ENCODE measurements at regions of chr11 and their contacts with region 1.

Region 1: GRCh38 chr11:121318848-121319834 is 26.6 kb downstream of the SC5D start:
- DNase-seq: peak in 1 of 5 donors; percentile 10
- ATAC-seq: peak in 3 of 4 donors; percentile 66 to 78 (median 74)
- H3K4me3 ChIP-seq: no peak overlapping the region
- H3K27ac ChIP-seq: no peak overlapping the region
- H3K4me1 ChIP-seq: peaks cover 0 to 5% (median 0%) of the 10 kb centered on the region in 12 donors
- H3K27me3 ChIP-seq: peaks cover 0 to 8% (median 0%) of the 10 kb centered on the region in 9 donors
- CTCF ChIP-seq: peak; percentile 45 to 75 (median 66)
- POLR2A ChIP-seq: no peak

Region 2: GRCh38 chr11:121063728-121064127 is 255.4 kb before region 1 on chr11:
- intact Hi-C with region 1: no loop called
- DNase-seq: no peak
- ATAC-seq: no peak
- H3K4me3 ChIP-seq: no peak overlapping the region
- H3K27ac ChIP-seq: no peak overlapping the region
- H3K4me1 ChIP-seq: peaks cover 0 to 9% (median 0%) of the 10 kb centered on the region in 12 donors
- H3K27me3 ChIP-seq: no peaks in the 10 kb centered on the region
- CTCF ChIP-seq: peak in 11 of 12 donors; percentile 8 to 52 (median 35)
- POLR2A ChIP-seq: no peak

Region 3: GRCh38 chr11:121426476-121427399 is 107.6 kb after region 1 on chr11:
- intact Hi-C with region 1: loop called in 2 of 10 experiments (anchors 10 kb)
- DNase-seq: peak; percentile 49 to 80 (median 62)
- ATAC-seq: peak; percentile 58 to 94 (median 80)
- H3K4me3 ChIP-seq: peak overlapping the region in 10 of 12 donors; percentile 15 to 53 (median 38)
- H3K27ac ChIP-seq: peak overlapping the region in 3 of 12 donors; percentile 15 to 50 (median 19)
- H3K4me1 ChIP-seq: peaks cover 0 to 42% (median 0%) of the 10 kb centered on the region in 12 donors
- H3K27me3 ChIP-seq: no peaks in the 10 kb centered on the region
- CTCF ChIP-seq: peak in 7 of 12 donors; percentile 13 to 51 (median 31)
- POLR2A ChIP-seq: no peak

Region 4: DNA sequence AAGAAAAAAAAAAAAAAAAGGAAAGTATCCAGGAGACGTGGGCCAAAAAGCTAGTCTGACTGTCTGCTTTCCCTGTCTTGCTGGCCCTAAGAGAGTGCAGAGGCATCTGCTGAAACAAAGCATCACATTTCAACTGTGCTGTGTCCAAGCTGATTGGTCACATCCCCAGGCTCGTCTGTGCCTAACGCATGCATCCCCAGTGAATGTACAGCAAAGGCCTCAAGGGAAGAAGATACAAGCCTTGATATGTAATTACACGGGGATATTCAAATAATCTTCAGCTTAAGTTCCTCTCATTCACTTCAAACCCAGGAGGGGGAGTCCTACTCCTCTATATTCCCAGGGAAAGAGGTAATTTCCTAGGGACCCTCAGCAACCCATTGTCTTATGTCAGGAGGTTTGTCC is 127.6 kb after region 1 on chr11:
- intact Hi-C with region 1: loop called in 7 of 10 experiments (anchors 5 to 10 kb)
- DNase-seq: no peak
- ATAC-seq: no peak
- H3K4me3 ChIP-seq: no peak overlapping the region
- H3K27ac ChIP-seq: no peak overlapping the region
- H3K4me1 ChIP-seq: peaks cover 0 to 57% (median 1%) of the 10 kb centered on the region in 12 donors
- H3K27me3 ChIP-seq: peaks cover 0 to 4% (median 0%) of the 10 kb centered on the region in 9 donors
- CTCF ChIP-seq: no peak
- POLR2A ChIP-seq: no peak

Region 5: GRCh38 chr11:121534131-121535093 is 215.3 kb after region 1 on chr11:
- intact Hi-C with region 1: loop called (anchors 1 to 10 kb)
- DNase-seq: no peak
- ATAC-seq: peak in 3 of 4 donors; percentile 68 to 80 (median 78)
- H3K4me3 ChIP-seq: no peak overlapping the region
- H3K27ac ChIP-seq: no peak overlapping the region
- H3K4me1 ChIP-seq: peaks cover 0 to 3% (median 0%) of the 10 kb centered on the region in 12 donors
- H3K27me3 ChIP-seq: no peaks in the 10 kb centered on the region
- CTCF ChIP-seq: peak in 11 of 12 donors; percentile 12 to 61 (median 47)
- POLR2A ChIP-seq: no peak

Region 6: DNA sequence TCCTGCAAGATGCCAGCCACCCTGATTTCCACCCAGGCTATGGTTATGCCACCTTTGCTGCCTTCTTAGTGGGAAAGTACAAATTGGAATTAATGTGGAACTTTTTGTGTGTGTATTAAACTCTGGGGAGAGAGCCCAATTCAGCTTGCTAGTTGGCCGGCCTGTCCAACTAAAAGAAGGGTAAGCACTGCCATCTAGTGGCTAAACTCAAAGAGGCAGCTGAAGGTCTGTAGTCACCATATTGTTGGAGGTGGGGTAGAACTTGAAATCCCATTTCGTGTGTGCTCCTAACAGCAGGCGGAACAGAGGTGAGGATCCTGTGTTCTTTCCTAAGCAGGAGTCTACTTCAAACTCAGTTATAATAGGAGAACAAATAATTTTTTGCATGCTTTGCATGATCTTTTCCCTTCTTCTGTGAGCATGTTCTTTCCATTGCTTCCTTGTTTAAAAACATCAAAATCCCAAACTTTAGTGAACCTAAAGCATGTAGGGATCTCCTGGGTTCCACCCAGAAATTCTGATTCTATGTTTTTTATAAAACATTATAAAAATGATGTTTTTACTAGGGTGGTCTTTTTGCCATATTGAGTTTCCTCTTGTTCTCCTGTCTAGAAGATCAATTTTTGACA is 272.4 kb after region 1 on chr11:
- intact Hi-C with region 1: loop called (anchors 1 to 2 kb)
- DNase-seq: peak in 4 of 5 donors; percentile 43 to 67 (median 57)
- ATAC-seq: peak; percentile 45 to 82 (median 78)
- H3K4me3 ChIP-seq: no peak overlapping the region
- H3K27ac ChIP-seq: no peak overlapping the region
- H3K4me1 ChIP-seq: peaks cover 0 to 19% (median 0%) of the 10 kb centered on the region in 12 donors
- H3K27me3 ChIP-seq: no peaks in the 10 kb centered on the region
- CTCF ChIP-seq: peak; percentile 78 to 92 (median 87)
- POLR2A ChIP-seq: no peak

Region 7: GRCh38 chr11:121961321-121961801 is 642.2 kb after region 1 on chr11:
- intact Hi-C with region 1: no loop called
- DNase-seq: no peak
- ATAC-seq: no peak
- H3K4me3 ChIP-seq: no peak overlapping the region
- H3K27ac ChIP-seq: peak overlapping the region in 3 of 12 donors; percentile 2 to 41 (median 15)
- H3K4me1 ChIP-seq: peaks cover 0 to 22% (median 4%) of the 10 kb centered on the region in 12 donors
- H3K27me3 ChIP-seq: no peaks in the 10 kb centered on the region
- CTCF ChIP-seq: no peak
- POLR2A ChIP-seq: no peak

Measured in heart left ventricle (tissue), 16 donors.